ENCODE measurements at regions of chr1 and their contacts with region 1.

Region 1: DNA sequence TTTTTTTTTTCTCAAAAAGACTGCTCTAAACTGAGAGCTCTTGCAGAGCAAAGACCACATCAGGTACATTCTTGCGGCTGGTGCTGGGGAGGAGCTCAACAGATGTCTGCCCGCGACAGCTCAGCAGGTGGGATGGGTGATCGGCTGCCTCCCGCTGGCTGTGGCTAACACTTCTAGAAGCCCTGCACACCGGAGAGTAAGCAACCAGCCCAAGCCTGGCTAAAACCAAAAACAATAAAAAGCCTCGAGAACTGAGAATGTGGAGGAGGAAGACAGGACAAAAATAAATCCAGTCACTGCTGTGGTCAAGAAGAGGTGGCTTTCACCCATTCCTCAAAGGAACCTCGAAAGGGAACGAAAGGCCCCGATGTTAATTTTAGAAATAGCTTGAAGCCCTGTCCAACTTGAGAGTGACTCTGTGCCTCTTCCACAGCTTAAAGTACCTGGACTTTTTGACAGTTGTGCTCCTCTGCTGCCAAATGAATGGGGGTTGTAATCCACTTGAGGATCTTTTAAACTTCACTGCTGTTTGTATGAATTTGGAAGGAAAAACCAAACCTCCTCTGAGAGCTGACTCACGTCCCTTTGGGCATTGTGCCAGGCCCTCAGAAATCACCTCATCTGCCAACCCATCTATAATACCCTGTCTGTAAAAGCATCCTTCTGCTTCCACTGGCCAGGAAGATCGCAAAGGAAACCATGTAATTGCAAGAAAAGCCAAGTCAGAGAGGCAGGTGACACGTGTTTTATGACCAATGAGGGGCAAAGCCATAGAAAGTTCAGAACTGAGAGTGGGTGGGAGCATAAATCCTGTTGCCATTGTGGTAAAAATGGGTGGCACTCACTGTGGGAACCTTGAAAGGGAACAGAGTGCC is 78.6 kb downstream of the KCNN3 start:
- DNase-seq: peak; percentile 93
- H3K4me3 Mint-ChIP-seq: peak overlapping the region; percentile 63
- H3K27ac Mint-ChIP-seq: peak overlapping the region; percentile 81
- H3K4me1 Mint-ChIP-seq: peaks cover 28% of the 10 kb centered on the region
- H3K27me3 Mint-ChIP-seq: peaks cover 18% of the 10 kb centered on the region

Region 2: GRCh38 chr1:154755858-154756730 is 35.4 kb before region 1 on chr1:
- intact Hi-C with region 1: loop called (anchors 1 kb)
- DNase-seq: peak; percentile 69
- H3K4me3 Mint-ChIP-seq: peak overlapping the region; percentile 14
- H3K27ac Mint-ChIP-seq: peak overlapping the region; percentile 88
- H3K4me1 Mint-ChIP-seq: peaks cover 72% of the 10 kb centered on the region
- H3K27me3 Mint-ChIP-seq: no peaks in the 10 kb centered on the region

Region 3: GRCh38 chr1:154847891-154848290 is 56.4 kb after region 1 on chr1:
- intact Hi-C with region 1: loop called (anchors 5 kb)
- DNase-seq: no peak
- H3K4me3 Mint-ChIP-seq: no peak overlapping the region
- H3K27ac Mint-ChIP-seq: no peak overlapping the region
- H3K4me1 Mint-ChIP-seq: peaks cover 13% of the 10 kb centered on the region
- H3K27me3 Mint-ChIP-seq: peaks cover 9% of the 10 kb centered on the region